ENCODE measurements at regions of chr13 and their contacts with region 1.

Region 1: GRCh38 chr13:110108347-110109174 is 198.4 kb downstream of the COL4A1 start:
- DNase-seq: no peak
- H3K4me3 ChIP-seq: no peak overlapping the region
- H3K27me3 ChIP-seq: no peaks in the 10 kb centered on the region
- CTCF ChIP-seq: peak; percentile 89

Region 2: GRCh38 chr13:108961542-108962125 is 1146.9 kb before region 1 on chr13:
- CTCF ChIA-PET with region 1: interaction called, 45 read pairs
- POLR2A ChIA-PET with region 1: no interaction called
- DNase-seq: no peak
- H3K4me3 ChIP-seq: no peak overlapping the region
- H3K27me3 ChIP-seq: no peaks in the 10 kb centered on the region
- CTCF ChIP-seq: peak; percentile 75

Region 3: GRCh38 chr13:109145631-109146030 is 962.9 kb before region 1 on chr13:
- CTCF ChIA-PET with region 1: interaction called, 13 read pairs
- POLR2A ChIA-PET with region 1: no interaction called
- DNase-seq: no peak
- H3K4me3 ChIP-seq: no peak overlapping the region
- H3K27me3 ChIP-seq: no peaks in the 10 kb centered on the region
- CTCF ChIP-seq: peak; percentile 89

Region 4: DNA sequence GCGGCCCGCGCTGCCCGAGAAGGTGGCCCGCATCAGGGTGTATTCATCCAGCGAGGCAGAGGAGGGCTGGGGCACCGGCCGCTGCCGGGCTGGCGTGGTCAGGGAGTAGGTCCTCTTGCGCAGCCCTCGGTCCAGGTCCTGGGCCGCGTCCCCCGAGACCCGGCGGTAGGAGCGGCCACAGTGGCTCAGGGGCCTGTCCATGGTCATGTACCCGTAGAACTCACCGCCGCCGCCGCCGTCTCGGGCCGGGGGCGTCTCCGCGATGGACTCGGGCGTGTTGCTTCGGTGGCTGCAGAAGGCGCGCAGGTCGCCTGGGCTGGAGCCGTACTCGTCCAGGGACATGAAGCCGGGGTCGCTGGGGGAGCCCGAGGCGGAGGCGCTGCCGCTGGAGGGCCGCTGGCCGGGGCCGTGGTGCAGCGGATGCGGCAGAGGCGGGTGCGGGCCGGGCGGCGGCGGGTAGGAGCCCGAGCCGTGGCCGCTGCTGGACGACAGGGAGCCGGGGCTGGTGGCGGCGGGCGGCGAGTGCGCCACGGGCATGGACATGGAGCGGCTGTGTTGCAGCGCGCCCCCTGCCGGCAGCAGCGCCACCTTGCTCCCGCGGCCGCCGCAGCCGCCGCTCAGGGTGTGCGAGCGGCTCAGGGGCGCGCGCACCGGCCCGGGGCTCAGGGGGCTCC is 324.2 kb before region 1 on chr13:
- CTCF ChIA-PET with region 1: interaction called, 10 read pairs
- POLR2A ChIA-PET with region 1: no interaction called
- DNase-seq: no peak
- H3K4me3 ChIP-seq: peak overlapping the region; percentile 55
- H3K27me3 ChIP-seq: no peaks in the 10 kb centered on the region
- CTCF ChIP-seq: 0 out of 2 replicates have a peak, but pooled peaks have one; percentile 1